ENCODE measurements at regions of chr7 and their contacts with region 1.

Region 1: GRCh38 chr7:41892356-41893100 is 189.6 kb upstream of the INHBA start:
- DNase-seq: peak in 2 of 3 donors; percentile 40 to 47
- H3K4me3 ChIP-seq: no peak overlapping the region
- H3K27ac ChIP-seq: no peak overlapping the region
- H3K4me1 ChIP-seq: peaks cover 0 to 14% (median 9%) of the 10 kb centered on the region in 4 experiments
- H3K27me3 ChIP-seq: no peaks in the 10 kb centered on the region

Region 2: DNA sequence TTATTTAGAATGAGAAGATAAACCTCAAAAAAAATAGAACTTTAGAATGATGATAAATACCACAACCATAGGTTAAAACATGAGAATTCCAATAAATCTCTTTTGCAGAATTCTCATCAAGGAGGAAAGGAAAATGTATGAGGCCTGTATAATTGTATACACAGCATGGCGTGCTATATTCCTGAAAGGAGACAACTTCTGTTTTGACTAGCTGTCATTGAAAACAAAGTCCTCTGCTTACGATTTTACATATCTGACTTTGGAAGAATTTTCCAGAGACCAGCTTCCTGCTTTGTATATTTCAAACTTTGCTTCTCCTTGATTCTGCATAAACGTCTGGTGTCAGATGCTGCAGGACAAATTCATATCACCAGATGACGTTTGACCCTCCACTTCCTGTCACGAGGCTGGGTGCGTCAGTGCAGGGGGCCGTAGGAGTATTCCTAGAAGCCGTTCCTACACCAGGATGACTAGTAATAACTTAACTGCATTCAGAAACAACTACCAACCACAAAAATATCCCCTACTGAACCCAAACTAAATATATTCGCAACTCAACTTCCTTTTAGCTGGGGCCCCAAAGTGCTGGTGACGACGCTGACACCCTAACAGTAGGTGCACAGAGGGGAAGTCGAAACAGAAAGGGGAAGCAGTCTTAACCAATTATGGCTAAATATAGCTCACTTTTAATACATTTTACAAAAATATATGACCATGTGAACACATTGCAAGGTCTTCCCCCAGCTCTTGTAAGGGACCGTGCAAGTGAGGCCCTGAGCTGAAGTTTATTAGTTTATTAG is 11.0 kb before region 1 on chr7:
- CTCF ChIA-PET with region 1: interaction called, 16 read pairs
- POLR2A ChIA-PET with region 1: interaction called, 3 read pairs
- DNase-seq: peak; percentile 96 to 99 (median 98)
- H3K4me3 ChIP-seq: peak overlapping the region in 6 of 7 experiments; percentile 1 to 44 (median 30)
- H3K27ac ChIP-seq: peak overlapping the region; percentile 81 to 90
- H3K4me1 ChIP-seq: peaks cover 34 to 67% (median 48%) of the 10 kb centered on the region in 4 experiments
- H3K27me3 ChIP-seq: no peaks in the 10 kb centered on the region

Region 3: GRCh38 chr7:42208572-42208971 is 316.0 kb after region 1 on chr7:
- CTCF ChIA-PET with region 1: no interaction called
- POLR2A ChIA-PET with region 1: no interaction called
- DNase-seq: no peak
- H3K4me3 ChIP-seq: no peak overlapping the region
- H3K27ac ChIP-seq: no peak overlapping the region
- H3K4me1 ChIP-seq: no peaks in the 10 kb centered on the region
- H3K27me3 ChIP-seq: peaks cover 0 to 4% (median 0%) of the 10 kb centered on the region in 5 experiments

Measured in common myeloid progenitor, CD34-positive (primary cell).